Adrenal gland (tissue), 19 donors: ENCODE measurements at regions of chr11 and their contacts with region 1.

Region 1: GRCh38 chr11:93791493-93791892 is 7.4 kb downstream of the MED17 start:
- DNase-seq: peak in 3 of 7 donors; percentile 20 to 33 (median 22)
- H3K4me3 ChIP-seq: no peak overlapping the region
- H3K27ac ChIP-seq: no peak overlapping the region
- H3K4me1 ChIP-seq: peaks cover 9 to 14% of the 10 kb centered on the region in 2 donors
- H3K27me3 ChIP-seq: no peaks in the 10 kb centered on the region
- CTCF ChIP-seq: no peak
- POLR2A ChIP-seq: no peak

Region 2: DNA sequence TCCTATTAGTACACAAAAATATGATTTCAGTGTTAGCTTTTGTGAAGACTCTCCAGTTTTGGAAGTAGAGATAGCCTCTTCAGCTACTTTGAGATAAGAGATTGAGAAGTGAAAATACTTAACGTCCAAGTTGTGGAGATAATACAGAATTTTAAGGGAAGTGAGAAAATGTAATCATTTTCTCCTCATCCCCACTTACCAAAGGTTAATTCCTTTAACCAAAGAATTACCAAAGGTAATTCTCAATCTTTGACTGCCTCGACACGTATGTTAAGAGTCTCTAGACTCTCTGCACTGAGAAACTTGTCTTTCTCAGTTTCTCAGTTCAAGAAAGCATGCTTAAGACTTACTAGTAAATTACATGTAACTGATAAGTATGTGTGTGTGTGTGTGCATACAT is 34.7 kb before region 1 on chr11:
- intact Hi-C with region 1: loop called in 1 of 2 experiments (anchors 5 kb)
- DNase-seq: no peak
- H3K4me3 ChIP-seq: no peak overlapping the region
- H3K27ac ChIP-seq: no peak overlapping the region
- H3K4me1 ChIP-seq: no peaks in the 10 kb centered on the region
- H3K27me3 ChIP-seq: no peaks in the 10 kb centered on the region
- CTCF ChIP-seq: no peak
- POLR2A ChIP-seq: no peak